Activated T-helper 1 cell treated with anti-CD3 and anti-CD28 coated beads, Interleukin-12 subunit alpha, Interleukin-12 subunit beta, Interleukin-2, Interleukin-4 antibody, amounts not matched to agents 30 ng/mL and 10 ng/mL and 1 ng/mL, durations not matched to agents 14 hours and 24 hours and 36 hours (primary cell): ENCODE measurements at regions of chr1 and their contacts with region 1.

Region 1: GRCh38 chr1:96845464-96845863 is 123.9 kb downstream of the PTBP2 start:
- DNase-seq: peak; percentile 19
- H3K4me3 Mint-ChIP-seq: no peak overlapping the region
- H3K27ac Mint-ChIP-seq: no peak overlapping the region
- H3K4me1 Mint-ChIP-seq: no peaks in the 10 kb centered on the region
- H3K27me3 Mint-ChIP-seq: peaks cover 5% of the 10 kb centered on the region

Region 2: GRCh38 chr1:96080925-96081324 is 764.5 kb before region 1 on chr1:
- intact Hi-C with region 1: loop called (anchors 10 kb)
- DNase-seq: no peak
- H3K4me3 Mint-ChIP-seq: no peak overlapping the region
- H3K27ac Mint-ChIP-seq: no peak overlapping the region
- H3K4me1 Mint-ChIP-seq: no peaks in the 10 kb centered on the region
- H3K27me3 Mint-ChIP-seq: no peaks in the 10 kb centered on the region

Region 3: GRCh38 chr1:96596226-96596922 is 249.1 kb before region 1 on chr1:
- intact Hi-C with region 1: loop called (anchors 5 kb)
- DNase-seq: peak; percentile 2
- H3K4me3 Mint-ChIP-seq: no peak overlapping the region
- H3K27ac Mint-ChIP-seq: no peak overlapping the region
- H3K4me1 Mint-ChIP-seq: no peaks in the 10 kb centered on the region
- H3K27me3 Mint-ChIP-seq: no peaks in the 10 kb centered on the region